ENCODE measurements at regions of chr2 and their contacts with region 1.

Region 1: GRCh38 chr2:65056215-65057053 is at the start of gene CEP68:
- DNase-seq: peak; percentile 97 to 99 (median 98)
- H3K4me3 ChIP-seq: peak within 1 kb of the TSS; percentile 75 to 92 (median 83)
- H3K27ac ChIP-seq: peak within 1 kb of the TSS in 1 of 2 experiments; percentile 75
- H3K4me1 ChIP-seq: peaks cover 30 to 72% (median 68%) of the 10 kb centered on the region in 4 experiments
- H3K27me3 ChIP-seq: no peaks in the 10 kb centered on the region

Region 2: DNA sequence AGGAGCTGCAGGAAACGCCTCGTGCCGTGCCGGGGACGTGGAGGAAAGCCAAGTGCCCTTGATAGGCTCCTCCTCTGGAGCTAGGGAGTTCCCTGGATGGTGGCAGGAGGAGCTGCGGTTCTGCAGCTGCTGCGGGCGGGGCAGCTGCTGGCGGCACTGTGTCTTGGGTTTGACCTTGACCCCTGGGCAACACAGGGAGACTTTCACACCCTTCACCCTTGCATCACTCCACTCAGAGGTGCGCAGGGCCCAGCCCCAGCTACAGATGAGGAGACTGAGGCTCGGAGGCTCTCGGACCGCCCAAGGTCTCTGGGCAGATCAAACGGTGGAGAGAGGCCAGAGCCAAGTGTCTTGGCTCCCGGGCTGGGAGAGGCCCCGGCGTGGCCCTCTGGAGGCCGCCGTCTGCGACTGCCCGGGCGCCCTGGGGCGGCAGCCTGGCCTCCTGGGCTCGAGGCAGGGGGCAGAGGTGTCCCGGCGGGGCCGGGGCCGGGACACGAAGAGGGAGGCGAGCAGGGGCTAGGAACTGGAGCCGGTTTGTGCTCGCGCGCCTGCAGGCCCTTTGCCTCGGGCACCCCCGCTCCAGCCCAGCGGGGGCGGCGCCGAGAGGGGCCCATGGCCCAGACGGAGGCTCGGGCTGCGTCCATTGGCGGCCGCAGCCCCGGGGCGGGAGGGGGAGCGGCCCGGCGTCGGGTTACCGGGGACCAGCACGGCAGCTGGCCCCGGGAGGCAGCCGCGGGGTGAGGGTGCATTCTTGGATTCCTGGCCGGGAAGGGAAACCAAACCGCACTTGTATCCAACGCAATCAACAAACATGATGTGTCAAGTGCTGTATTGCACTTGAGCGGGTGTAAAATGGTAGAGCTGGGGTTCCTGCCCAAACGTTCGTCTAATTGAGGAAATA is 196.9 kb before region 1 on chr2:
- CTCF ChIA-PET with region 1: no interaction called
- POLR2A ChIA-PET with region 1: no interaction called
- DNase-seq: peak in 2 of 3 donors; percentile 76 to 81
- H3K4me3 ChIP-seq: peak overlapping the region; percentile 21 to 70 (median 33)
- H3K27ac ChIP-seq: peak overlapping the region in 1 of 2 experiments; percentile 69
- H3K4me1 ChIP-seq: peaks cover 14 to 85% (median 34%) of the 10 kb centered on the region in 4 experiments
- H3K27me3 ChIP-seq: no peaks in the 10 kb centered on the region

Region 3: GRCh38 chr2:65040400-65041261 is 15.8 kb before region 1 on chr2:
- CTCF ChIA-PET with region 1: interaction called, 29 read pairs
- POLR2A ChIA-PET with region 1: no interaction called
- DNase-seq: peak; percentile 77 to 83 (median 80)
- H3K4me3 ChIP-seq: peak overlapping the region in 1 of 7 experiments; percentile 38
- H3K27ac ChIP-seq: no peak overlapping the region
- H3K4me1 ChIP-seq: peaks cover 0 to 8% (median 3%) of the 10 kb centered on the region in 4 experiments
- H3K27me3 ChIP-seq: no peaks in the 10 kb centered on the region

Region 4: GRCh38 chr2:65070172-65070830 is 13.9 kb after region 1 on chr2:
- CTCF ChIA-PET with region 1: interaction called, 17 read pairs
- POLR2A ChIA-PET with region 1: interaction called, 3 read pairs
- DNase-seq: no peak
- H3K4me3 ChIP-seq: no peak overlapping the region
- H3K27ac ChIP-seq: no peak overlapping the region
- H3K4me1 ChIP-seq: peaks cover 6 to 46% (median 42%) of the 10 kb centered on the region in 4 experiments
- H3K27me3 ChIP-seq: no peaks in the 10 kb centered on the region

Region 5: DNA sequence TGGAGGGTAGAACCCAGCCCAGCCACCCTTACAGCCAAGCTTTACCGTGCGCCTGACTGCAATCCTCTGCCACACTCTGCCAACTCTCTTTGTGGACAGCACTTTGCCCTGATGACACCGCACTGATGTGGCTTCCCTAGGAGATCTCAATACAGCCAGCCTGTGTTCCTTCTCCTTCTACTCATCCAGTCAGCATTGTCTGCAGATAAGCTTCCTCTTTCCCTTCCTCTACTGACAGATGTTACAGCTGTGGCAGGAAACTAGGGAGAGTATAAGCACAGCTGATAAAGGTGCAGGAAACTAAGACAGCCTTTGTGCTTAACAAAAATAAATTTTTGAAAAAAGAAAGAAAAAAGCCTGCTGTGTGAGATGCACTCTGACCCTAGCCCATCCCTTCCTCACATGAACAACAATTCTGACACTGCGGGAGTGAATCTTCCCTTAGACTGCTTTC is 24.8 kb after region 1 on chr2:
- CTCF ChIA-PET with region 1: no interaction called
- POLR2A ChIA-PET with region 1: interaction called, 11 read pairs
- DNase-seq: peak; percentile 91 to 99 (median 98)
- H3K4me3 ChIP-seq: peak overlapping the region in 1 of 7 experiments; percentile 48
- H3K27ac ChIP-seq: peak overlapping the region; percentile 42 to 69
- H3K4me1 ChIP-seq: peaks cover 6 to 42% (median 33%) of the 10 kb centered on the region in 4 experiments
- H3K27me3 ChIP-seq: no peaks in the 10 kb centered on the region

Region 6: DNA sequence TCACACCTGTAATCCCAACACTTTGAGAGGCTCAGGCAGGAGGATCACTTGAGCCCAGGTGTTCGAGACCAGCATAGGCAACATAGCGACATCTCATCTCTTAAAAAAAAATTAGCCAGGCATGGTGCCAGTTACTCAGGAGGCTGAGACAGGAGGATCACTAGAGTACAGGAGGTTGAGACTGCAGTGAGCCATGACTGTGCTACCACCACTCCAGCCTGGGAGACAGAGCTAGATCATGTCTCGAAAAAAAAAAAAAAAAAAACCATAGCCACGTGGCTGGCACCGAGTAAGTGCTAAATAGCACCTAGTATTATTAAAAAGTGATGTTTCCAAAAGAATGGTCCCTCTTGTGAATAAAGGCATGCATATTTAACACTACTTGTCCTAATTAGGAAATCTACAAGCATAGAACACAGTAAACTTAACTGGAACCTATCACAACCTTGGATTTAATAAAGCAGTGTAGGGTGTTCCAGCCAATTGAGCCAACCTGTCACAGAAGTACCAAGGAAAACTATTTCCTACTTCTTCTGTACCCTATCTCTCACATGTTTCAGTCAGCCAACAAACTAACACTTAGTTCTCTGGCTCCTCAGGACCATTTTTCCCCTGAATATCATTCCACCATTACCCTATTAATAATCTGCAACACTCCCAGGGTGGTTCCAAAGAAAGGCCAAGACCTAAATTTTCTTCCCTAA is 64.7 kb after region 1 on chr2:
- CTCF ChIA-PET with region 1: no interaction called
- POLR2A ChIA-PET with region 1: no interaction called
- DNase-seq: no peak
- H3K4me3 ChIP-seq: no peak overlapping the region
- H3K27ac ChIP-seq: no peak overlapping the region
- H3K4me1 ChIP-seq: peaks cover 3 to 24% (median 13%) of the 10 kb centered on the region in 4 experiments
- H3K27me3 ChIP-seq: no peaks in the 10 kb centered on the region

Region 7: DNA sequence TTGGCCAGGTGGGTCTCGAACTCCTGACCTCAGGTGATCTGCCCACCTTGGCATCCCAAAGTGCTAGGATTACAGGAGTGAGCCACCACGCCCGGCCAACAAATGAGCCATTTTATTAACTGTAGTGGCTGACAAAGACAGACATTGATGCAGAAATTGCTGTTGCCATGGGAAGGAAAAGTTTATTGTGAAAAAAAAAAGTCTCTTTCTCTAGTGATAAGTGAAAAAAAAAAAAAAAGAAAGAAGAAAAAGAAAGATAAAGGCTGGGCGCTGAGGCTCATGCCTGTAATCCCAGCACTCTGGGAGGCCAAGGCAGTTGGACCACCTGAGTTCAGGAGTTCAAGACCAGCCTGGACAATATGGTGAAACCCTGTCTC is 113.3 kb after region 1 on chr2:
- CTCF ChIA-PET with region 1: interaction called, 131 read pairs
- POLR2A ChIA-PET with region 1: no interaction called
- DNase-seq: peak in 1 of 3 donors; percentile 7
- H3K4me3 ChIP-seq: no peak overlapping the region
- H3K27ac ChIP-seq: no peak overlapping the region
- H3K4me1 ChIP-seq: peaks cover 8 to 18% (median 14%) of the 10 kb centered on the region in 4 experiments
- H3K27me3 ChIP-seq: no peaks in the 10 kb centered on the region

Region 8: GRCh38 chr2:65411056-65411795 is 354.8 kb after region 1 on chr2:
- CTCF ChIA-PET with region 1: no interaction called
- POLR2A ChIA-PET with region 1: no interaction called
- DNase-seq: no peak
- H3K4me3 ChIP-seq: no peak overlapping the region
- H3K27ac ChIP-seq: no peak overlapping the region
- H3K4me1 ChIP-seq: peaks cover 4 to 17% (median 12%) of the 10 kb centered on the region in 4 experiments
- H3K27me3 ChIP-seq: no peaks in the 10 kb centered on the region

Measured in common myeloid progenitor, CD34-positive (primary cell).